Caco-2 (cell line): ENCODE measurements at regions of chr16 and their contacts with region 1.

Region 1: GRCh38 chr16:83441517-83441916 is 366.3 kb upstream of the HSBP1 start:
- DNase-seq: no peak
- H3K4me3 ChIP-seq: no peak overlapping the region
- H3K4me3 Mint-ChIP-seq: no peak overlapping the region
- H3K27ac Mint-ChIP-seq: no peak overlapping the region
- H3K4me1 ChIP-seq: no peaks in the 10 kb centered on the region
- H3K4me1 Mint-ChIP-seq: no peaks in the 10 kb centered on the region
- H3K27me3 ChIP-seq: no peaks in the 10 kb centered on the region
- H3K27me3 Mint-ChIP-seq: peaks cover 19% of the 10 kb centered on the region
- CTCF ChIP-seq: no peak

Region 2: DNA sequence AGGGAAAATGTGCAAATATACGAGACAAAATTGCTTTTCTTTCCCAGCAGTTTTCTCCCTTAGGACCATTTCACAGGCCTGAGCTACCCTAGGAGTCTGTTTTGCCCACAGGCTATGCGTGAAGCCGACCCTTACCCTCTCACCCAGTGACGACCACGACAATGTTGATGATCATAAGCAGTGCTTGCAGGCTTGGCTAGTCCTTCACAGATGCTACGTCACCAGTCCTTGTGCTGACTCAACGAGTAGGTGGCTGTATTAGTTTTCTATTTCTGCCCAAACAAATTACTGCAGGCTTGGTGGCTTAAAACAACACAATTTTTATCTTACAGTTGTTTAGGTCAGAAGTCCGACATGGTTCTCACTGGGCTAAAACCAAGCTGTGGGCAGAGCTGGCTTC is 208.4 kb before region 1 on chr16:
- CTCF ChIA-PET with region 1: no interaction called
- POLR2A ChIA-PET with region 1: no interaction called
- intact Hi-C with region 1: no loop called
- DNase-seq: no peak
- H3K4me3 ChIP-seq: no peak overlapping the region
- H3K4me3 Mint-ChIP-seq: no peak overlapping the region
- H3K27ac Mint-ChIP-seq: no peak overlapping the region
- H3K4me1 ChIP-seq: no peaks in the 10 kb centered on the region
- H3K4me1 Mint-ChIP-seq: no peaks in the 10 kb centered on the region
- H3K27me3 ChIP-seq: no peaks in the 10 kb centered on the region; the same call in none of the 2 replicates
- H3K27me3 Mint-ChIP-seq: peaks cover 22% of the 10 kb centered on the region
- CTCF ChIP-seq: no peak

Region 3: DNA sequence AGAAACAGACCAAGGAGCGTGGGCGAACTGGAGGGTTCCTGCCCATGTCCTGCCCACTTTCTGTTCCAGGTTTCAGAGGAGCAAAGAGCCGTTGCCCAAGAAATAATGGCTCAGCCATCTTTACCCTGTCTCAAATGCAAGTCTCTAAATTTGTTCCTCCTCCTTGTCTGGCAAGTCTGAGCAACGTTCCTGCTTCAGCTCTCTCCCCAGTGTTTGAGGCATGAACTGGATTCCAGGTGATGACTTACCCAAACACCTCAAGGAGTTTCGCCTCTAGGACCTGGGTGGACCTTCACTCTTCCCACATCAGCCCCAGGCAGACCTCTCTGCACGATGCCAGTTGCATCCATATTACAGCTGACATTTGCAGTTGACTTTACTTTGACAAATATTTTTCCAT is 155.6 kb before region 1 on chr16:
- CTCF ChIA-PET with region 1: no interaction called
- POLR2A ChIA-PET with region 1: no interaction called
- intact Hi-C with region 1: no loop called
- DNase-seq: no peak
- H3K4me3 ChIP-seq: no peak overlapping the region
- H3K4me3 Mint-ChIP-seq: no peak overlapping the region
- H3K27ac Mint-ChIP-seq: no peak overlapping the region
- H3K4me1 ChIP-seq: no peaks in the 10 kb centered on the region
- H3K4me1 Mint-ChIP-seq: no peaks in the 10 kb centered on the region
- H3K27me3 ChIP-seq: no peaks in the 10 kb centered on the region
- H3K27me3 Mint-ChIP-seq: peaks cover 30% of the 10 kb centered on the region
- CTCF ChIP-seq: no peak

Region 4: GRCh38 chr16:83402967-83403366 is 38.5 kb before region 1 on chr16:
- CTCF ChIA-PET with region 1: interaction called, 11 read pairs
- POLR2A ChIA-PET with region 1: no interaction called
- intact Hi-C with region 1: no loop called
- DNase-seq: no peak
- H3K4me3 ChIP-seq: no peak overlapping the region
- H3K4me3 Mint-ChIP-seq: no peak overlapping the region
- H3K27ac Mint-ChIP-seq: no peak overlapping the region
- H3K4me1 ChIP-seq: no peaks in the 10 kb centered on the region
- H3K4me1 Mint-ChIP-seq: no peaks in the 10 kb centered on the region
- H3K27me3 ChIP-seq: no peaks in the 10 kb centered on the region
- H3K27me3 Mint-ChIP-seq: peaks cover 10% of the 10 kb centered on the region
- CTCF ChIP-seq: no peak

Region 5: GRCh38 chr16:83552228-83552627 is 110.7 kb after region 1 on chr16:
- CTCF ChIA-PET with region 1: no interaction called
- POLR2A ChIA-PET with region 1: no interaction called
- intact Hi-C with region 1: no loop called
- DNase-seq: no peak
- H3K4me3 ChIP-seq: no peak overlapping the region
- H3K4me3 Mint-ChIP-seq: no peak overlapping the region
- H3K27ac Mint-ChIP-seq: no peak overlapping the region
- H3K4me1 ChIP-seq: no peaks in the 10 kb centered on the region
- H3K4me1 Mint-ChIP-seq: no peaks in the 10 kb centered on the region
- H3K27me3 ChIP-seq: no peaks in the 10 kb centered on the region
- H3K27me3 Mint-ChIP-seq: peaks cover 10% of the 10 kb centered on the region
- CTCF ChIP-seq: no peak